ENCODE measurements at regions of chr6 and their contacts with region 1.

Region 1: GRCh38 chr6:52419809-52420670 is at the start of gene EFHC1:
- DNase-seq: peak; percentile 78 to 97
- ATAC-seq: peak; percentile 93 to 94
- H3K4me3 ChIP-seq: peak within 1 kb of the TSS; percentile 67
- H3K27ac ChIP-seq: peak within 1 kb of the TSS; percentile 91 to 93
- H3K4me1 ChIP-seq: peaks cover 44% of the 10 kb centered on the region
- CTCF ChIP-seq: no peak
- EP300 ChIP-seq: no peak
- POLR2A ChIP-seq: peak; percentile 91
- RAD21 ChIP-seq: no peak
- polyA plus RNA-seq, gene EFHC1: 43.5 and 46.7 TPM in 2 replicates

Region 2: DNA sequence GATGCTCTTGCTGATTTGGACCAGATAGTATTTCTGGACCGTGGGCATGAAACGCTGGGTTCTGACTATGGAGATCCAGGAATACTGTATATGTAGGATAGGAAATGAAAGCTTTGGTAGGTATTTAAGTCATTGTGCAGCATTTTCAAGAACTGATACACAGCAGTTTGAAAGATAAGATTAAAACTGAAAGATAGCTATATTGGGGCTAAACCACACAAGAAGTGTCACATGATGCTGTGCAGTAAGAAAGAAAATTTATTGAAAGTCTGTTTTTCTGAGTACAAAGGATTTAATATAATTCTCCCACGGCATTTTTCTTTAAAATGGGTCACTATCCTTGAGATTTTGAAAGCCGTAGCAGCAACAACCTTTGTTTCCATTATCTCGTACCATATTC is 233.6 kb before region 1 on chr6:
- CTCF ChIA-PET with region 1: no interaction called
- POLR2A ChIA-PET with region 1: no interaction called
- DNase-seq: no peak
- ATAC-seq: no peak
- H3K4me3 ChIP-seq: no peak overlapping the region
- H3K27ac ChIP-seq: no peak overlapping the region
- H3K4me1 ChIP-seq: no peaks in the 10 kb centered on the region
- CTCF ChIP-seq: no peak
- EP300 ChIP-seq: no peak
- POLR2A ChIP-seq: no peak
- RAD21 ChIP-seq: no peak

Region 3: DNA sequence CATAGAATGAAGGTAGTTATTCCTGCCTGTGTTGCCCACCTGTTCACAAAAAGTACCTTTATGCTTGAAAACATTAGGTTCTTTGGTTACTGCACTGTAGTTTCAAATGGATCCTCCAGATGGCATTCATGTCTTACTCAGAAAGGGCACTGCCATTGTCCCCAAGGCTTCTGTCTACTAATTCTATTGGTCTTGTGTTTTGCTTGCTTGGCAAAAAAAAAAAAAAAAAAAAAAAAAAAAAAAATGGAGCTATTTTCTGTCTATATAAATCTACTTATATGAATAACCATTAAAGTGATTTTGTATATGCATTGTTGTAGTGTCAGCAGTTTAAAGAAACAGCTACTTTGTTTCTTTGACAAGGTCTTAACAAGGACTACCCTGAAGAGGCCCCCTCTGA is 12.6 kb before region 1 on chr6:
- CTCF ChIA-PET with region 1: interaction called, 18 read pairs
- POLR2A ChIA-PET with region 1: interaction called, 4 read pairs
- DNase-seq: peak; percentile 48 to 68
- ATAC-seq: peak in 1 of 2 experiments; percentile 84; a peak in 3 of 6 replicates
- H3K4me3 ChIP-seq: no peak overlapping the region
- H3K27ac ChIP-seq: no peak overlapping the region
- H3K4me1 ChIP-seq: no peaks in the 10 kb centered on the region
- CTCF ChIP-seq: peak; percentile 52
- EP300 ChIP-seq: no peak
- POLR2A ChIP-seq: no peak
- RAD21 ChIP-seq: peak; percentile 64 to 70

Region 4: DNA sequence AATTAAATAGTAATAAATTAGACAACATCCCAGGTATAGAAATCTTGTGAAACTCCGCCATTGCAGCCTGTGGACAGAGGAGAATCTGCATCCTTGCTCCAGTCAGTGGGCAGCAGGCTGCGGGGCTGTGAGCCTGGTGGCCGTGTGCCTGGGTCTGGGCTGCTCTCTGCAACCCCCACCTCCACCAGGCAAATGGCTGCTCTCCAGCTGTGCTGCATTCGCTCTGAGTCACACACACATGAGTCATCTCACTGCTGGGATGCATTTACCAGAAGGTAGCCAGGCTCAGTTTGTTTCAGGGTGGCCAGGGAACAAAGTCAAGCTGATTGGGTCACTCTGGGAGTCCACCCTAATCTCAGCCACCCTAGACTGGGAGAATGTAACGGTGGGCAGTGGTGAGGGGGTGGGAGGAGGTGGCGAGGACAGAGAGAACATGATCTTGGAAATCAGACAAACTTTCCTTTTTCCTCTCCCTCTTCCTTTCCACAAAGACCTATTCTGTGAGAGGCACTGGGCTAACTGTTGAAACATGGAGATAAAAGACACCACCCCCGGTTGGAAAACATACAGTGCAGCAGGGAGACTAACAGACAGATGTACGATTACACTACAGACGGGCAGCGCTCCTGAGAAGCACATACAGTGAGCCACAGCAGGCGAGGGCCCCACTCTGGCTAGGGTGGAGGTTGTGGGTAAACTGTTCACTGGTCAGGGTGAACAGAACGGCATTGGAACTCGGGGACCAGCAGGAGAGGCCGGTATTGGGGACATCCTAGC is 97.7 kb after region 1 on chr6:
- CTCF ChIA-PET with region 1: no interaction called
- POLR2A ChIA-PET with region 1: no interaction called
- DNase-seq: peak; percentile 78 to 91
- ATAC-seq: peak; percentile 95 to 96
- H3K4me3 ChIP-seq: peak overlapping the region; percentile 17; the same call in 1 of the 3 replicates
- H3K27ac ChIP-seq: peak overlapping the region; percentile 94 to 96
- H3K4me1 ChIP-seq: peaks cover 73% of the 10 kb centered on the region
- CTCF ChIP-seq: no peak
- EP300 ChIP-seq: peak in 1 of 2 experiments; percentile 43; a peak in 2 of 5 replicates
- POLR2A ChIP-seq: no peak; the same call in 1 of the 2 replicates
- RAD21 ChIP-seq: 0 out of 5 replicates have a peak, but pooled peaks of 1 of the 2 experiments have one; percentile 14

Region 5: GRCh38 chr6:52577022-52577777 is 157.2 kb after region 1 on chr6 and contains the start of gene TRAM2:
- CTCF ChIA-PET with region 1: interaction called, 9 read pairs
- POLR2A ChIA-PET with region 1: interaction called, 10 read pairs
- DNase-seq: peak; percentile 40 to 72
- ATAC-seq: peak; percentile 84 to 86
- H3K4me3 ChIP-seq: peak within 1 kb of the TSS; percentile 69
- H3K27ac ChIP-seq: peak within 1 kb of the TSS; percentile 95 to 100
- H3K4me1 ChIP-seq: peaks cover 39% of the 10 kb centered on the region
- CTCF ChIP-seq: no peak
- EP300 ChIP-seq: no peak
- POLR2A ChIP-seq: peak; percentile 59
- RAD21 ChIP-seq: no peak; a peak in 1 of 5 replicates
- polyA plus RNA-seq, gene TRAM2: 25.4 and 25.6 TPM in 2 replicates

Region 6: GRCh38 chr6:52598123-52598823 is 178.2 kb after region 1 on chr6:
- CTCF ChIA-PET with region 1: interaction called, 23 read pairs
- POLR2A ChIA-PET with region 1: interaction called, 10 read pairs
- DNase-seq: peak; percentile 61 to 76
- ATAC-seq: peak; percentile 77 to 90
- H3K4me3 ChIP-seq: no peak overlapping the region
- H3K27ac ChIP-seq: peak overlapping the region; percentile 18 to 36; a peak in 4 of 6 replicates
- H3K4me1 ChIP-seq: peaks cover 37% of the 10 kb centered on the region
- CTCF ChIP-seq: peak; percentile 45
- EP300 ChIP-seq: no peak
- POLR2A ChIP-seq: no peak
- RAD21 ChIP-seq: peak; percentile 47 to 51

Region 7: DNA sequence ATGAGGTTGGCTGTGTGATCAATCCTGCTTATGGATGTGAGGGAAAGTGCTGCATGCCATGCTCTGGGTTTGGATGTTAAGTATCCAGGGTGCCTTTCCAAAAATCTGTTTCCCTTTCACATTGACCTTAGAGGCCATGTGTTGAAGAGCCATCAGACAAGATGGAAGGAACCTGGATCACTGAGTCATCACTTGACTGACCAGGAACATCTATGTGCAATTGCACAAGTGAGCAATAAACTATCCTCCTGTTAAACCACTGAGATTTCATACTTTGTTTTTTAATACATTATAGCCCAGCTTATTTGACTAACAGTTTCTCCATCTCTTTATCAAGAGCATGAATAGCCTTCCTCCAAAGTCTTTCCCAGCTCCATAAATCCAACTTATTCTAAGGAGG is 233.1 kb after region 1 on chr6:
- CTCF ChIA-PET with region 1: interaction called, 31 read pairs
- POLR2A ChIA-PET with region 1: no interaction called
- DNase-seq: no peak
- ATAC-seq: no peak
- H3K4me3 ChIP-seq: no peak overlapping the region
- H3K27ac ChIP-seq: no peak overlapping the region
- H3K4me1 ChIP-seq: no peaks in the 10 kb centered on the region
- CTCF ChIP-seq: no peak
- EP300 ChIP-seq: no peak
- POLR2A ChIP-seq: no peak
- RAD21 ChIP-seq: no peak

Measured in A549 (cell line).